Left ventricle myocardium superior (tissue), 1 donor: ENCODE measurements at regions of chr10 and their contacts with region 1.

Region 1: GRCh38 chr10:108894402-108895301 is 1028.7 kb downstream of the XPNPEP1 start:
- DNase-seq: no peak
- ATAC-seq: no peak

Region 2: DNA sequence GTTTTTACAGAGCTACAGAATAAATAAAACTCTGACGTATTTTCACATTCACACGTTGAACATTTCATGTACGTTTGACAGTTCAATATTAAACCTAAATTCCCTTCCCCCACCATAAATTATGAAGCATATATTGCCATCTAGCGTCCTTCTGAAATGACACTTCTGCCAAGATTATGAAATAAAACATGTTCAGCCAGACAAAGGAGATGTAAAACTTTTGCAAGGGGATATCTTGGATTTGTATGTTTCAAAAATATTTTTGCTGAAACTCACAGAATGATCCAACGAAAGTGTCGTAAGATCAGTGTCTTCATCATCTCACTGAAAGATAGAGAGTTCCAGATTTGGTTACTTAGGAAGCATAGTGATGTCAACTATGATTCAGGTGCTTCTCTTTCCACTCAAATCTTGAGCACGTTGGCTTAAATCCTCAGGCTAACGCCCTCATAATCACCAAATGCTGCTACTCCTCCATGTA is 124.3 kb after region 1 on chr10:
- intact Hi-C with region 1: loop called (anchors 5 kb)
- DNase-seq: no peak
- ATAC-seq: no peak

Region 3: DNA sequence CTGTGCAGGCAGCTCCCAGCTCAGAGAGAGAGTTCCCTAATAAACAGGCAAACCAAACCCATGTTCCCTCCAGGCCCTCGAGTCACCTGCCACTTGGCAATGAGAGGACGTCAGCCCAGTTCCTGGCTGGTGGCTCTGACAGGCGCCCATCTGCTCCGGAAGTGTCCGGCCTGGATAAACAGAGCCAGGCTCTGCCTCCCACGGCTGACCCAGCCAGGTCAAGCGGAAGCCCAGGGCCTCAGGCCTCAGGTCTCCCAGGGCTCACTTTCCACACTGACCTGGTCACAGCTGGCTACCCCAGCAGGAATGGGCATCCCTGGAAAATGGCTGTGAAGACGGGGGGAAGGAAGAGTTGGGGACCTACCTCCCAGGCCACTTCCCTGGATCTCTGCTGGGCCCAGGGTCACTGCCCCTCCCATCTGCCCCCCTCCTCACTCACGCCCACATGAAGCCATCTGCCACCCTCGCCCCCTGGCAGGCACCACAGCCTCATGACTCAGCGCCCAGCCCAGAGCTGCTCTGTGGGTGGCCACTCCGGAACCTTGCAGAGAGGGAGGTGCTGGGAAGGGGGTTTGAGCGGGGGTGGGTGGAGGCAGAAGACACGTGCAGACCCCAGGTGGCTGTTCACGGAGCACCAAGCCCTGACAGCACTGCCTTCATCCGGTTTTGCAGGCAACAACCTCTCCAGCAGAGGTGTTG is 1565.6 kb after region 1 on chr10:
- intact Hi-C with region 1: no loop called
- DNase-seq: peak; percentile 55
- ATAC-seq: peak; percentile 67